ENCODE measurements at regions of chr17 and their contacts with region 1.

Region 1: DNA sequence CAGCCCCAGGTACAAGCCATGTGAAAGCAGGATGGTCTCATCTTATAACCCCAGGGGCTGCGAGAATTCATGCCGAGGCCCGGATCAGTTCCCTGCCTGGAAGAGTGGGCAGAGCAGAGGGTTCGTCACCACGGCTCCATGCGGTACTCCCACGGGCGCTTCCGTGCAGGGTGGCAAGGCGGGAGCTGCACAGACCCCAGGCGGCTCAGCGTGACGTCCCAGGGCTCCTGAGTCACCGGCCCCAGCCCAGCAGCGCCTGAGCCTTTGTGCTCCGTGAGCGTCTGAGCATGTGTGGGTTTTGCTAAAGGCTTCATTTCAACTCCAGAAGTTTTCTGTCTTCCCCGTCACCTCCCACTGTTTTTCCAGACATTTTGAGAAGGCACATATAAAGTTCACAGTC is 71.2 kb upstream of the CHMP6 start:
- DNase-seq: peak; percentile 51
- ATAC-seq: peak; percentile 47

Region 2: GRCh38 chr17:80855948-80856862 is 64.2 kb before region 1 on chr17:
- intact Hi-C with region 1: no loop called
- DNase-seq: no peak
- ATAC-seq: no peak

Region 3: DNA sequence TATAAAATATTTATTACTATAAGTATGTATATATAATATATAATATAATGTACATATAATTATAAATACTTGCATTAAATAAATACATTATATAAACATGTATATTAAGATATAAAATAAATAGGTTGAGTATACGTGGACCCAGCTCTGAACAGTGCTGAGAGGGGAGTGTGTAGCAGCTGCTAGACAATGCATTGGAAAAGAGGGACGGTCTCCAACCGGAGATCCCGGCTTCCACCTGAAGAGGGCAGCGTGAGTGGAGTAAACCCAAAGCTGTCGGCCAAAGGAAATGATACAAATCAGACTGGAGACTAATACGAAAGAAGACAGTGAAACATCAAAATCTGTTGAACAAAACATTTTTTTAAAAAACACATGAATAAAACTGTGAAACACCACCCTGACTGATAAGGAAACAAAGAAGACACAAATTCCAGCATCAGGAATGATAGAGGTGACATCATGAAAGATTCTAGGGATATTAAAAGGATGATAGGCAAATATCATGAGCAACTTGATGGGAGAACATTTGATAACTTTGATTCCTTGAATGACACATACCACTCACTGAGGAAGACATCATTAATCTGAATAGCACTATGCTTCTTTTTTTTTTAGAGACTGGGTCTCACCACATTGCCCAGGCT is 54.2 kb before region 1 on chr17:
- intact Hi-C with region 1: no loop called
- DNase-seq: peak; percentile 85
- ATAC-seq: peak; percentile 68

Region 4: GRCh38 chr17:80898716-80899115 is 21.7 kb before region 1 on chr17:
- intact Hi-C with region 1: loop called (anchors 1 kb)
- DNase-seq: no peak
- ATAC-seq: no peak

Region 5: GRCh38 chr17:80970044-80970761 is 49.8 kb after region 1 on chr17:
- intact Hi-C with region 1: no loop called
- DNase-seq: no peak
- ATAC-seq: peak; percentile 74

Region 6: GRCh38 chr17:82734987-82735866 is 1814.8 kb after region 1 on chr17 and contains the start of gene FN3K:
- intact Hi-C with region 1: loop called (anchors 5 kb)
- DNase-seq: peak; percentile 85
- ATAC-seq: peak; percentile 87
- total RNA-seq, gene FN3K: 57.2 TPM

Measured in sciatic nerve (tissue), 2 donors.